Natural killer cell (primary cell): ENCODE measurements at regions of chr1 and their contacts with region 1.

Region 1: GRCh38 chr1:35192853-35193664 is at the start of gene SFPQ:
- DNase-seq: peak; percentile 98 to 99
- ATAC-seq: peak; percentile 86 to 95 (median 89)
- H3K4me3 ChIP-seq: peak within 1 kb of the TSS; percentile 87
- H3K4me3 Mint-ChIP-seq: peak within 1 kb of the TSS; percentile 97
- H3K27ac ChIP-seq: peak within 1 kb of the TSS; percentile 90
- H3K27ac Mint-ChIP-seq: peak within 1 kb of the TSS; percentile 95 to 97
- H3K4me1 ChIP-seq: peaks cover 23% of the 10 kb centered on the region
- H3K4me1 Mint-ChIP-seq: peaks cover 36 to 45% of the 10 kb centered on the region in 2 donors
- H3K27me3 ChIP-seq: no peaks in the 10 kb centered on the region
- H3K27me3 Mint-ChIP-seq: no peaks in the 10 kb centered on the region
- CTCF ChIP-seq: no peak
- total RNA-seq, gene SFPQ: 492 to 594 (median 558) TPM

Region 2: GRCh38 chr1:34859446-34860200 is 333.4 kb before region 1 on chr1 and contains the start of gene SMIM12:
- intact Hi-C with region 1: loop called (anchors 10 kb)
- DNase-seq: peak; percentile 87 to 94
- ATAC-seq: peak; percentile 96 to 99 (median 99)
- H3K4me3 ChIP-seq: peak within 1 kb of the TSS; percentile 86
- H3K4me3 Mint-ChIP-seq: peak within 1 kb of the TSS; percentile 96
- H3K27ac ChIP-seq: peak within 1 kb of the TSS; percentile 75
- H3K27ac Mint-ChIP-seq: peak within 1 kb of the TSS; percentile 83 to 94
- H3K4me1 ChIP-seq: peaks cover 44% of the 10 kb centered on the region
- H3K4me1 Mint-ChIP-seq: peaks cover 59 to 61% of the 10 kb centered on the region in 2 donors
- H3K27me3 ChIP-seq: no peaks in the 10 kb centered on the region
- H3K27me3 Mint-ChIP-seq: no peaks in the 10 kb centered on the region
- CTCF ChIP-seq: peak; percentile 86
- total RNA-seq, gene SMIM12: 33.4 to 44.5 (median 36.5) TPM

Region 3: DNA sequence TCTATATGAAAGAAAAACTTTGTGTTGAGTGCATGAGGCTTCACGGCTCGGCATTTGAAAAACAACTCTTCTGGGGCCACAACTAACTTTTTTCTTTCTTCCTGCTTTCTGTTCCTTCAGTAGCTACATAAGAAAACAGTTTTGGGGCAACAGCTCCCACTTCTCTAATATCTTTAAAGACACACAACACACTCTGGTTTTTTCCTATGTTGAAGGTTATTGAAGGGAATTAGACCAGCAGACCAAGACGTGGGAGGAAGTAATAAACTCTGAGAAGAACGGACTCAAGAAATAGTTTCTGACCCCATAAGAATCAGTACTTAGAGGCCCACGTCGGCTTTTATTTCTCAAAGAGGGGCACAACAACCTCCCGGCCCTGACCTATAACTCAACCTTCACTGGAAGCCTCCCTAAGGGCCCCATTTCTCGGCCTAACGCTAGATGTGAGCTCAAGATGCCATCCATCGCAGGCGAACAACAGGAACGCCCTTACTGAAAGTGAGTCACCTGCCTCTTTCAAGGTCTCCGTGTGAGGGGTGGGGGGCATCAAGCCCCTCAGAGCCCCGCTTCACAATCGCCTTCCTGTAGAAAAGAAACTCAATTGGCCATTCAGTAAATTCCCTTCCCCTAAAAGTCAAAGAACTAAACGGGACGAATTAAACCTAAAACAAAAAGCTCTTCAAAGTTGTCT is 162.2 kb before region 1 on chr1:
- intact Hi-C with region 1: loop called (anchors 2 kb)
- DNase-seq: peak; percentile 22 to 55
- ATAC-seq: peak; percentile 22 to 55 (median 24)
- H3K4me3 ChIP-seq: peak overlapping the region; percentile 55
- H3K4me3 Mint-ChIP-seq: peak overlapping the region; percentile 99
- H3K27ac ChIP-seq: peak overlapping the region; percentile 74
- H3K27ac Mint-ChIP-seq: peak overlapping the region; percentile 93 to 94
- H3K4me1 ChIP-seq: peaks cover 21% of the 10 kb centered on the region
- H3K4me1 Mint-ChIP-seq: peaks cover 43 to 47% of the 10 kb centered on the region in 2 donors
- H3K27me3 ChIP-seq: no peaks in the 10 kb centered on the region
- H3K27me3 Mint-ChIP-seq: no peaks in the 10 kb centered on the region
- CTCF ChIP-seq: no peak

Region 4: DNA sequence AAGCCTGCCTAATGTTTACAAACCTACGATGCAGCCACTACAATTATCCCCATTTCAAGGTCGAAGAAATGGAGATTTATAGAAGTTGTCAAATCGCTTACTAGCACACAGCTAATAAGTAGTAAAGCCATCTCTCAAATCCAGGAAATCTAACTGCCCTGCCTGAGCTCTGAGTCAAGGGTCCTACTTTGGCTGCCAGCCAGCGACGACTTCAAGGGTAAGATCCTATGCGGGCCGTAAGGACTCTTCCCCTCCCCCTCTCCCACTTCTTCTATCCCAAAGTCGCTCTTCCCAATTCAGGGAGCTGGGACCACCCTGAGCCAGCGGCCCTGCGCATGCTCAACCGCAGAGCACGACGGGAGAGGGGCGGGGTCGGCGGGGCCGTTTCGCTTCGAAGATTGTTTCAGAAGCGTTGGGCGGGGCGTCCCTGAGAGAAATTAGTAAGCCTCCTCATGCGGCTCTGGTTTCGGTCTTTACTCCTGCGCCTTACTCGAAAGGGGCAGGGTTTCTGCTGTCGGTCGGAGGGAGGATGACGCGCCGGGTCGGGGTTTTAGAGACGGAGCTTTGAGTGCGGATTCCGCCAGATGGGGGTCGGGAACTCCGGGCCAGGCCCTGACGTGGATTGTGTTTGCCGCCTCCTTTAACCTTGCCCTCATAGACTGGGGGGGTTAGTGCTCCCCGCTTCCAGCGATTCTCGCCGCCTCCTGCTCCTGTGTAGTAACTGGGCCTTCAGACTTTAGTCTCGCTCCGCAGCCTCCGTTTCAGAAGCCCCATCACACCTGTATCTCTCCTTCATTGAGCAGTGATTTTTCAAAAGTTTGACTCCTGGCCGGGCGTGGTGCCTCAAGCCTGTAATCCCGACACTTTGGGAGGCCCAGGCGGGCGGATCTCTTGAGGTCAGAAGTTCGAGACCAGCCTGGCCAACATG is 113.8 kb before region 1 on chr1 and contains the start of gene ZMYM1:
- intact Hi-C with region 1: loop called (anchors 1 kb)
- DNase-seq: peak; percentile 77 to 86
- ATAC-seq: peak; percentile 87 to 89 (median 88)
- H3K4me3 ChIP-seq: peak within 1 kb of the TSS; percentile 67
- H3K4me3 Mint-ChIP-seq: peak within 1 kb of the TSS; percentile 97
- H3K27ac ChIP-seq: peak within 1 kb of the TSS; percentile 86
- H3K27ac Mint-ChIP-seq: peak within 1 kb of the TSS; percentile 98 to 100
- H3K4me1 ChIP-seq: peaks cover 13% of the 10 kb centered on the region
- H3K4me1 Mint-ChIP-seq: peaks cover 32 to 36% of the 10 kb centered on the region in 2 donors
- H3K27me3 ChIP-seq: no peaks in the 10 kb centered on the region
- H3K27me3 Mint-ChIP-seq: peaks cover 0 to under 1% of the 10 kb centered on the region in 2 donors
- CTCF ChIP-seq: no peak
- total RNA-seq, gene ZMYM1: 15.0 to 19.1 (median 19.1) TPM

Region 5: GRCh38 chr1:35268282-35269200 is 75.5 kb after region 1 on chr1 and contains the start of gene ZMYM4:
- intact Hi-C with region 1: loop called (anchors 2 kb)
- DNase-seq: peak; percentile 81 to 95
- ATAC-seq: peak; percentile 94 to 95 (median 95)
- H3K4me3 ChIP-seq: peak within 1 kb of the TSS; percentile 78
- H3K4me3 Mint-ChIP-seq: peak within 1 kb of the TSS; percentile 90
- H3K27ac ChIP-seq: peak within 1 kb of the TSS; percentile 59
- H3K27ac Mint-ChIP-seq: peak within 1 kb of the TSS; percentile 83 to 86
- H3K4me1 ChIP-seq: peaks cover 9% of the 10 kb centered on the region
- H3K4me1 Mint-ChIP-seq: peaks cover 15 to 32% of the 10 kb centered on the region in 2 donors
- H3K27me3 ChIP-seq: no peaks in the 10 kb centered on the region
- H3K27me3 Mint-ChIP-seq: peaks cover 0 to 7% of the 10 kb centered on the region in 2 donors
- CTCF ChIP-seq: no peak
- total RNA-seq, gene ZMYM4: 41.0 to 48.0 (median 45.8) TPM